SK-N-SH (cell line): ENCODE measurements at regions of chr17 and their contacts with region 1.

Region 1: DNA sequence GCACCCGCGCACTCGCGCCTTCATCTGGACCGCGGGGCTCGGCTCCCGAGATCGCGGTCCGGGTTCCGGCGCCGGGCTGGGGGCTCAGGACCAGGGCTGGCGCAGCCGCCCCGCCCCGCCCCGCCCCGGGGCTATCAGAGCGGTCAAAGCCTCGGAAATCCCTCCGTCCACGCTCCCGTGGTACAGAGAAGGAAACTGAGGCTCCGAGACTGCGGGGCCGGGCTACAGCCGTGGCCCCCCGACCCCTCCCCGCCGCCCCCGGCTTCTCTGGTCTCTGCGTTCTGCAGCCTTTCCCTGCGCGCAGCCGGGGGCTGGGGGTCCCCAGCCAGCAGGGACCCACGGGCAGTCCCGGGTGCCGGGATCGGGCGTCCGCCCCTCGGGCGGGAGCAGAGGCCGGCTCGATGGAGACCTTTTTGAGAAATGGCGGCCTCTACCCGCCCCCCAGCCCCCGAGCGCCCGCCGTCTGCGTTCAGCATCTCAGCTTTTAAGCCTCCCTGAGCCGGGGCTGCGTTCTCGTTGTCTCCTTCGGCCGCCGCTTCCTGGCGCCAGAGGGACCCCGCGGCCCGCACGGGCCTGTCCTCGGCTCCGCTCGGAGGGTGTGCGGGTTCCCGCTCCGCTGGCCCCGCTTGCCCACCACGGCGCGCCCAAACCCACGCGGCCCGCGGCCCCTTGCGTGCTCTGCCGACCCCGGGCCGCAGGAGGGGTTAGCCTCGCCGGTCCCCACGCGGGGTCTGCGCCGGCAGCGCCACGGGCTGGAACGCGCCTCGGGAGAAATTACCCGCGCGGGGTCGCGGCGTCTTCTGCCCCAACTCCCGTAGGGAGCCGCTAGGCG is 1.5 kb upstream of the NPTX1 start:
- DNase-seq: peak; percentile 95
- H3K4me3 ChIP-seq: peak overlapping the region; percentile 29 to 58
- H3K27ac ChIP-seq: no peak overlapping the region
- H3K4me1 ChIP-seq: peaks cover 0 to 14% of the 10 kb centered on the region in 2 experiments; a peak in 1 of 4 replicates
- H3K27me3 ChIP-seq: peaks cover 95% of the 10 kb centered on the region
- CTCF ChIP-seq: peak; percentile 60
- EP300 ChIP-seq: no peak
- RAD21 ChIP-seq: peak; percentile 77

Region 2: GRCh38 chr17:80454557-80455335 is 23.1 kb before region 1 on chr17:
- CTCF ChIA-PET with region 1: interaction called, 15 read pairs
- POLR2A ChIA-PET with region 1: interaction called, 9 read pairs
- DNase-seq: peak; percentile 100
- H3K4me3 ChIP-seq: peak overlapping the region; percentile 71 to 78
- H3K27ac ChIP-seq: peak overlapping the region; percentile 79 to 97
- H3K4me1 ChIP-seq: peaks cover 0 to 34% of the 10 kb centered on the region in 2 experiments; a peak in 1 of 4 replicates
- H3K27me3 ChIP-seq: no peaks in the 10 kb centered on the region
- CTCF ChIP-seq: no peak; the same call in 1 of the 2 replicates
- EP300 ChIP-seq: no peak
- RAD21 ChIP-seq: no peak

Region 3: GRCh38 chr17:80491478-80492342 is 13.8 kb after region 1 on chr17:
- CTCF ChIA-PET with region 1: interaction called, 12 read pairs
- POLR2A ChIA-PET with region 1: no interaction called
- DNase-seq: peak; percentile 91
- H3K4me3 ChIP-seq: no peak overlapping the region; a peak in 1 of 4 replicates
- H3K27ac ChIP-seq: no peak overlapping the region
- H3K4me1 ChIP-seq: peaks cover 0 to 3% of the 10 kb centered on the region in 2 experiments; a peak in 2 of 4 replicates
- H3K27me3 ChIP-seq: peaks cover 5% of the 10 kb centered on the region
- CTCF ChIP-seq: no peak
- EP300 ChIP-seq: no peak
- RAD21 ChIP-seq: no peak

Region 4: DNA sequence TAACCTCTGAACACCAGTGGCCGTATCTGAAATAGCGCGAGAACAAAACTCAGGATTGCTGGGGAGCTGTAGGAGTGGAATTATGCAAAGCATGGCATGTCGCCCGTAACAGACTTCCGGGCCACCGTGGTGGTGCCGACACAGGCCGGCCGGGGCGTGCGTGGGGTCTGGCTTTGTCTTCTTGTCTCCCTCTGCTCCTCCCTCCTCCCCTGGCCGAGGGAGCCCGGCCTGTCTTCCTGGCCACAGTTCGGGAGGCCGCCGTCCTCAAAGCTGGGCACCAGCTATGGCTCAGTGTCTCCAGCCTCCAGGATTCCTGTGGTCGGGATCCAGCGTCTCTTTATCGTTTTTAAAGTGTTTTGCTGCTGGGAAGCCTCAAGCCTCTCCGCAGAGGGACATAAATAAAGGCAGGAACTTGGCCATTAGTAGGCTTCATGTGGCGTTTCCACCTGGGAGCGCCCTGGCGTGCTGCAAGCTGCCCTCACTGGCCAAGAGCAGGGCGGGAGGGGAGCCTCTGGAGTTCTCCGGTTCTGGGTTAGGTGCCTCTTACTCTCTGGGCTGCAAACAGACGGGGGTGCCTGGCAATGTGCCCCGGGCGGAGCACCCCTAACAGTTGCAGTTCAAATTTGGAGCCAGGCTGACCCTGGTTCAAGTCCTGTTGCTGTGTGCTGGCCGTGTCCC is 20.5 kb after region 1 on chr17:
- CTCF ChIA-PET with region 1: interaction called, 12 read pairs
- POLR2A ChIA-PET with region 1: no interaction called
- DNase-seq: no peak
- H3K4me3 ChIP-seq: no peak overlapping the region
- H3K27ac ChIP-seq: no peak overlapping the region
- H3K4me1 ChIP-seq: peaks cover 0 to 10% of the 10 kb centered on the region in 2 experiments; a peak in 1 of 4 replicates
- H3K27me3 ChIP-seq: peaks cover 5% of the 10 kb centered on the region
- CTCF ChIP-seq: no peak
- EP300 ChIP-seq: no peak
- RAD21 ChIP-seq: no peak

Region 5: GRCh38 chr17:80981062-80981902 is 503.4 kb after region 1 on chr17:
- CTCF ChIA-PET with region 1: interaction called, 13 read pairs
- POLR2A ChIA-PET with region 1: no interaction called
- DNase-seq: peak; percentile 99
- H3K4me3 ChIP-seq: peak overlapping the region; percentile 25 to 44
- H3K27ac ChIP-seq: no peak overlapping the region
- H3K4me1 ChIP-seq: no peaks in the 10 kb centered on the region; a peak in 1 of 4 replicates
- H3K27me3 ChIP-seq: no peaks in the 10 kb centered on the region
- CTCF ChIP-seq: peak; percentile 96
- EP300 ChIP-seq: no peak
- RAD21 ChIP-seq: peak; percentile 86